Sigmoid colon (tissue), 7 donors: ENCODE measurements at regions of chr2 and their contacts with region 1.

Region 1: DNA sequence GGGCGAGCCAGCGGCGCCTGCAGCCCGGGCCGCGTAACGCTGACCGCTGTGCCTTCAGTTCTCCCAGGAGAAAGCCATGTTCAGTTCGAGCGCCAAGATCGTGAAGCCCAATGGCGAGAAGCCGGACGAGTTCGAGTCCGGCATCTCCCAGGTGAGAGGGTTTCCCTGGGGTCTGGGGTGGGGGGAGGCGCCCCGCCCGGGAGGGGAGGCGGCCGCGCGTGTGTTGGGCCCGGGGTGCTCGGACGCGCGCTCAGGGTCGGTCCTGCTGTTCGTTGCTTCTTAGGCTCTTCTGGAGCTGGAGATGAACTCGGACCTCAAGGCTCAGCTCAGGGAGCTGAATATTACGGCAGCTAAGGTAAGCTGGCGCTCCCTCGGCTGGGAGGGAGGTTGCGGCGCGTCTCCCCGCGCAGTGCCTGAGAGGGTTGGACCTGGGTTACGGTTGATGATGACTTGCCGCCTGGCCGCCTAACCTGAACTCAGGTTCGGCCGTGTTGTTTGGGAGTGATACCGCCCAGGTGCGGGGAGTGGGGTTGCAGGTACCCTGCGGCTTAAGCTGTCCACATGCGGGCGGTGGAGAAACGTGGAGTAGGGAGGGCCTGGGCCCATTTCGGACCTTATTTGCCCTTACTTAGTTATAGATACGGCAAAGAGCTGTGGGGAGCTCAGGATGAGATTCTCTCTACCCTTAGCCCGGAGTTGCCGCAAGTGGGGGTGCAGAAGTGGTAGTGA is 638 bp downstream of the RPS7 start:
- DNase-seq: no peak
- H3K4me3 ChIP-seq: peak overlapping the region; percentile 84 to 91 (median 86)
- H3K27ac ChIP-seq: peak overlapping the region; percentile 87 to 95 (median 90)
- H3K4me1 ChIP-seq: peaks cover 0 to 44% (median 38%) of the 10 kb centered on the region in 4 donors
- H3K27me3 ChIP-seq: no peaks in the 10 kb centered on the region
- CTCF ChIP-seq: no peak
- EP300 ChIP-seq: no peak
- POLR2A ChIP-seq: no peak

Region 2: GRCh38 chr2:3379647-3380534 is 195.8 kb before region 1 on chr2 and contains the start of gene TRAPPC12:
- intact Hi-C with region 1: loop called (anchors 1 kb)
- DNase-seq: peak; percentile 95
- H3K4me3 ChIP-seq: peak within 1 kb of the TSS; percentile 66 to 81 (median 72)
- H3K27ac ChIP-seq: peak within 1 kb of the TSS; percentile 88 to 94 (median 92)
- H3K4me1 ChIP-seq: peaks cover 0 to 37% (median 30%) of the 10 kb centered on the region in 4 donors
- H3K27me3 ChIP-seq: no peaks in the 10 kb centered on the region
- CTCF ChIP-seq: peak in 2 of 4 experiments; percentile 20 to 21
- EP300 ChIP-seq: no peak
- POLR2A ChIP-seq: peak; percentile 71 to 76
- total RNA-seq, gene TRAPPC12: 48.5 to 79.5 (median 63.4) TPM

Region 3: GRCh38 chr2:3493615-3494007 is 82.1 kb before region 1 on chr2:
- intact Hi-C with region 1: no loop called
- DNase-seq: no peak
- H3K4me3 ChIP-seq: peak overlapping the region in 2 of 4 donors; percentile 3 to 7
- H3K27ac ChIP-seq: peak overlapping the region in 2 of 4 donors; percentile 19 to 37
- H3K4me1 ChIP-seq: peaks cover 0 to 4% (median 0%) of the 10 kb centered on the region in 4 donors
- H3K27me3 ChIP-seq: no peaks in the 10 kb centered on the region
- CTCF ChIP-seq: no peak
- EP300 ChIP-seq: no peak
- POLR2A ChIP-seq: no peak

Region 4: DNA sequence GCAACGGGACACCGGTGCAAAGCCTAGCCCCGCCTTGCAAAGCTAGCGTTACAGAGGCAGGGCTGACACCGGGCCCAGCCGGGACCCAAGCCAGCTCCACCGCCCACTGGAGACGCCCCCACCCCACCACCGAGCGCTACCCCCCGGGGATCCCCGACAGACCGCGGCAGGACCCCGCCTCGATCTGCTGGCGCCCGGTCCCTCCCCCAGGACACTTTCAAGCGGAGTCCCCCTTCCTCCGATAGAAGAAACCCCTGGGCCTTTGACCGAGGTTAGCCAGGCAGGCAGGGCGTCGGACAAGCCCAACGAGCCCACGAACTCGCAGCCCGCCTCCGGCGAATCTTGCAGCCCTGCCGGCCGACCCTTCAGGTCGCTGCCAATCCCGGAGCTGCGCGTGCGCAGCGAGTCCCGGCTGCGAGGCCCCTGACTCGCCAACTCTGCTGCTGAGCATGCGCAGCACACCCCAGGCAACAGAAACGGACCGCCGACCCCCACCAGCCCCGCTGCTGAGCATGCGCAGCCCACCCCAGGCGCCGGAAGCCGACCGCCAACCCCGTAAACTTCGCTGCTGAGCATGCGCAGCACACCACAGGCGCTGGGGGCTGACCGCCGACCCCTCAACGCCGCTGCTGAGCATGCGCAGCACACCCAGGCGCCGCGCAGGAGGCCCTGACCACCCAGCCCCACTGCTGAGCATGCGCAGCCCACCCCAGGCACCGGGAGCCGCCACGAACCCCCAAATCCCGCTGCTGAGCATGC is 57.0 kb before region 1 on chr2:
- intact Hi-C with region 1: loop called (anchors 2 kb)
- DNase-seq: peak; percentile 99
- H3K4me3 ChIP-seq: peak overlapping the region; percentile 73 to 95 (median 93)
- H3K27ac ChIP-seq: peak overlapping the region; percentile 96 to 100 (median 98)
- H3K4me1 ChIP-seq: peaks cover 0 to 53% (median 44%) of the 10 kb centered on the region in 4 donors
- H3K27me3 ChIP-seq: no peaks in the 10 kb centered on the region
- CTCF ChIP-seq: no peak
- EP300 ChIP-seq: peak in 1 of 4 donors; percentile 45
- POLR2A ChIP-seq: peak; percentile 37 to 46

Region 5: GRCh38 chr2:3712831-3713503 is 137.3 kb after region 1 on chr2:
- intact Hi-C with region 1: no loop called
- DNase-seq: no peak
- H3K4me3 ChIP-seq: no peak overlapping the region
- H3K27ac ChIP-seq: no peak overlapping the region
- H3K4me1 ChIP-seq: no peaks in the 10 kb centered on the region
- H3K27me3 ChIP-seq: peaks cover 0 to 3% (median 0%) of the 10 kb centered on the region in 3 donors
- CTCF ChIP-seq: no peak
- EP300 ChIP-seq: no peak
- POLR2A ChIP-seq: no peak